AG04450 (cell line): ENCODE measurements at regions of chr2 and their contacts with region 1.

Region 1: DNA sequence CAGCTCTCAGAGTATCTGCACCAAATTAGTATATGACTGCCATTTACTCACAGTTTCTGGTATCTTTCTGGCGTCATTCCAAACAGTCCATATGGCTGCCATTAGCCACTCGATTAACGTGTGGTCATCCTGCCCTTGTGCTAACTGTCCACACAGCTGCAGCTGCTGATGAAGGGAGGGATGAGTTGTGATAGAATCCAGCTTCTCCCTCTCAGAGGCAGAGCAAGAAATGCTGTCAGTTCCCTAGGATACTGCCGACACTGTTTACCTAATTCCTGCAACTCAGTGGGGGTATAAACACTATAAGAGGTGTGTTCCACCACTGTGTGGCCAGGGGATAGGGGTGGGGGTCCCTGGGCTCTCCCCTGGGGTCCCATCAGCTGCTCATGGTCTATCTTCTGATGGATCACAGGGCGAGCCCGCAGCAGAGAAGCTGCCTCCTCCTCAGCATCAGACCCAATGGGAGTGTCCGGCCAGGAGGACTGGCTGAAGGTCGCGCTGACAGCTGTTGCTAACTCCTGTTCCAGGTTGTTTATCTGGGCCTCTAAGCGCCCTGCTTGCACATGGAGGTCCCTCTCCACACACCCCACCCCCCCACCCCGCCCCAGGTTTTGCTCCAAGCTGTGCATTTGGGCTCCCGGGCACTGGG is 17.3 kb upstream of the KLHL23 start:
- DNase-seq: peak; percentile 55
- H3K4me3 ChIP-seq: peak overlapping the region; percentile 32
- H3K27ac ChIP-seq: peak overlapping the region; percentile 61
- H3K27me3 ChIP-seq: no peaks in the 10 kb centered on the region
- CTCF ChIP-seq: no peak

Region 2: GRCh38 chr2:168801961-168802858 is 914.2 kb before region 1 on chr2 and contains the start of gene NOSTRIN:
- CTCF ChIA-PET with region 1: no interaction called
- POLR2A ChIA-PET with region 1: no interaction called
- DNase-seq: no peak
- H3K4me3 ChIP-seq: no peak within 1 kb of the TSS
- H3K27ac ChIP-seq: no peak within 1 kb of the TSS
- H3K27me3 ChIP-seq: no peaks in the 10 kb centered on the region
- CTCF ChIP-seq: no peak
- polyA plus RNA-seq, gene NOSTRIN: 0.10 TPM in 1 of 2 replicates, not detected in the other

Region 3: GRCh38 chr2:169345486-169346120 is 370.8 kb before region 1 on chr2:
- CTCF ChIA-PET with region 1: no interaction called
- POLR2A ChIA-PET with region 1: no interaction called
- DNase-seq: no peak
- H3K4me3 ChIP-seq: no peak overlapping the region
- H3K27ac ChIP-seq: no peak overlapping the region
- H3K27me3 ChIP-seq: peaks cover 2% of the 10 kb centered on the region
- CTCF ChIP-seq: no peak

Region 4: DNA sequence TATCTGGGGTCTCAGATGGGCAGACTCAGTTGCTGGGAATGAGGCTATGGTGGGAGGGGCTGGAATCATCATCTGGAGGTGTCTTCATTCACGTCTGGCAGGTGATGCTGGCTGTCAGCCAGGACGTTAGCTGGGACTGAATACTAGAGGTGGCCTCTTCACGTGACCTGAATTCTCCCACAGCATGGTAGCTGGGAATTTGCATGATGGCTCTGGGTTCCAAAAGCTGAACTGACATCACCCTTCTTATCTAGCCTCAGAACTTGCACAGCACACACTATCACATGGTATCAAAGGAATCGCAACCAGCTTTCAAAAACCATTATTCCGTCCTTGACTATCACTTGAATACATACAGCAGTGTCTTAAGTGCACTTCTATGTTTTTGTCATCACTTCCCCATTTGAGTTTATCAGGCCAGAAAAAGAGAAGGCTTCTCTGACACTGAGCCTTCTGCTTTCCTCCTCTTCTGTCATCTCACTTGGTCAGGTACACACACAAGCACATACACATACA is 301.1 kb before region 1 on chr2:
- CTCF ChIA-PET with region 1: no interaction called
- POLR2A ChIA-PET with region 1: no interaction called
- DNase-seq: no peak
- H3K4me3 ChIP-seq: no peak overlapping the region
- H3K27ac ChIP-seq: no peak overlapping the region
- H3K27me3 ChIP-seq: no peaks in the 10 kb centered on the region
- CTCF ChIP-seq: no peak

Region 5: DNA sequence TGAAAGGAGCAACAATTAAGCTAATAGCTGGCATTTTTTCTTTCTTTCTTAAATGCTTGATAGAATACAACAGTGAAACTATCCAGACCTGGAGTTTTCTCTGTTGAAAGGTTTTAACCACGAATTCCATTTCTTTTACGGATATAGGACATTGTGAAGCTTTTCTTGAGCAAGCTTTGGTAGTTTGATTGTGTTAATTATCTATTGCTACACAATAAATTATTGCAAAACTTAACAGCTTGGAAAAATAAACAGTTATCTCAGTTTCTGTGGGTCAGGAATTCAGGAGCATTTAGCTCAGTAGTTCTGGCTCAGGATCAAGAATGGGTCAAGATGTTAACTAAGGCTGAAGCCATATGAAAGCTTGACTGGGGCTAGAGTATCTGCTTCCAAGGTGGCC is 10.4 kb before region 1 on chr2:
- CTCF ChIA-PET with region 1: no interaction called
- POLR2A ChIA-PET with region 1: interaction called, 17 read pairs
- DNase-seq: no peak
- H3K4me3 ChIP-seq: no peak overlapping the region
- H3K27ac ChIP-seq: no peak overlapping the region
- H3K27me3 ChIP-seq: no peaks in the 10 kb centered on the region
- CTCF ChIP-seq: no peak

Region 6: GRCh38 chr2:170566138-170566537 is 849.8 kb after region 1 on chr2:
- CTCF ChIA-PET with region 1: no interaction called
- POLR2A ChIA-PET with region 1: no interaction called
- DNase-seq: no peak
- H3K4me3 ChIP-seq: no peak overlapping the region
- H3K27ac ChIP-seq: no peak overlapping the region
- H3K27me3 ChIP-seq: no peaks in the 10 kb centered on the region
- CTCF ChIP-seq: no peak